Left ventricle myocardium inferior (tissue), 1 donor: ENCODE measurements at regions of chr3 and their contacts with region 1.

Region 1: DNA sequence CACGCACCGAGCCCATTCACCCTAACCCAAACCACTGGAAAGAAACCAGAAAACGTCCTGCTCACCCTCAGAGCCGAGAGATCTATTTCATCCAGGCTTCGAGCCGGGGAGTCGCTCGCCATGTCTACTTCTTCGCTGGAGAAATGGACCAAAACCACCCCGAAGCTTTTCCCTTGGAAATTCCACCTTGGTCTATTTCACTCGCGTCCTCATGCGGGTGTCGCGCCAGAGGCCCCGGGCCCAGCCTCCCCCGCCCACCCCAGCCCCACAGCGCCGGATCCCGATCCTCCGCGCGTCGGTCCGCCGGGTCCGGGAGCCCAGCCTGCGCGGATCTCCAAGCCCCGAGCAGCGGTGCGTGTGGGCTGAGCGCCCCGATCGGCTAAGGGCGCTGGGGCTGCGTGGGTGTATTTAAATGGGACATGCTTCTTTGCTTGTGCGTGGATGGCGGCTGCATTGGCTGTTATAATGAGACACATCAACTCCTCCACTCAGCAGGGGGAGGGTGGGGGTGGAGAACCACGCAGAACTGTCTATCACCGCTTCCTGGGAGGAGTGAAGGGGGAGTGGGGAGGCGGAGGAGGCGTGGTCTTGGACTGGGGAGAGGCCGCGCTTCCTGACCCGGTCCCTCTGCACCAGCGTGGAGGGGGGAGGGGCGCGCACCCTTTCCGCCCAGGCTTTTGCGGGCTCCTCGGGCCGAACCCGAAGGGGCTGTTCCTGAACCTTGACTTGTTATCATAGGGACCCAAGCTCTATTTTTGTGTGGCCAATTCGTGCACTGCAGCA is at the start of gene TNIK:
- DNase-seq: peak; percentile 94
- H3K4me3 ChIP-seq: peak within 1 kb of the TSS; percentile 84
- H3K27ac ChIP-seq: peak within 1 kb of the TSS; percentile 87
- H3K4me1 ChIP-seq: peaks cover 65% of the 10 kb centered on the region
- H3K27me3 ChIP-seq: peaks cover 13% of the 10 kb centered on the region
- CTCF ChIP-seq: no peak
- total RNA-seq, gene TNIK: 28.6 TPM

Region 2: DNA sequence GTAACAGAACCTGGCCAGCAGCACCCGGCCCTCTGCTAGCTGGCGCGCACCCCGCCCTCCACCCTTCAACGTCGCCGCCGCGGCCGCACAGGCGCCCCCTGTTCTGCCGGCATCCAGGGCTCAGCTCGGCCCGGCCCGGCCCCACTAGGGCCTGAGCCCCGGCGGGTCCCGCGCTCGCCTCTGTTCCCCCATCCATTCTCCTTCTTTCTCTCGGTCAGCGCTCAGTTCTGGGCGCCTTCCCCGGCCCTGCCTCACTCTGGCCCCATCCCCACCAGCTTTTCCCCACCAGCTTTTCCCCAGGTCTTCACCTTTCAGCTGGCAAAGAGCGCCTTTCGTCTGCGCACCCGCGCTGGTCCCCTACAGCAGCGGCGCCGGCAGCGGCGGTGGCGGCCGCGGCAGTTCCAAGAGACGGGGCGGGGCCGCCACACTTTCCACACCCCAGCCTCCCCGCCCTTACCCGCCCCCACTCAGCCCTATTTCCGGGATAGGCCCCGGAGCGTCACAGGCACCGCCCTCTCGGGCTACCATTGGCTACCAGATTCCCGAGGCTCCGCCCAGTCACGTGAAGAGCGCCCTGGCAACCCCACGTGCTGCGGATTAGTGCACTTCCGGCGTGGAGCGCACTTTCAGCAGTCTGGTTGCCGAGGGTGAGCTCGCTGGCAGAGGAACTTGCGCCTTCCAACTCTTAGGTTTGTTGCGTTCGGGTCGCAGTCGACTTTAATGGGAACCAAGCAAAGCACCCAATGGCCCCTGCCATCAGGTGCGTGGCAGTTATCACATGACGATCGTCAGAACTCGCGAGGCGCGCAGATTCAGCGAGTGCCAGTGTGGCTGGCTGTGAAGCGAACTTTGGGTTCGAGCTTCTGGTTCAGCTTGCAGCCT is 551.7 kb before region 1 on chr3 and contains the start of gene EIF5A2:
- intact Hi-C with region 1: no loop called
- DNase-seq: peak; percentile 96
- H3K4me3 ChIP-seq: peak within 1 kb of the TSS; percentile 80
- H3K27ac ChIP-seq: peak within 1 kb of the TSS; percentile 73
- H3K4me1 ChIP-seq: peaks cover 18% of the 10 kb centered on the region
- H3K27me3 ChIP-seq: no peaks in the 10 kb centered on the region
- CTCF ChIP-seq: no peak
- total RNA-seq, gene EIF5A2: 10.2 TPM

Region 3: GRCh38 chr3:171192176-171192854 is 267.8 kb before region 1 on chr3:
- intact Hi-C with region 1: loop called (anchors 10 kb)
- DNase-seq: no peak
- H3K4me3 ChIP-seq: no peak overlapping the region
- H3K27ac ChIP-seq: no peak overlapping the region
- H3K4me1 ChIP-seq: peaks cover 10% of the 10 kb centered on the region
- H3K27me3 ChIP-seq: no peaks in the 10 kb centered on the region
- CTCF ChIP-seq: no peak

Region 4: GRCh38 chr3:171293142-171293782 is 166.9 kb before region 1 on chr3:
- intact Hi-C with region 1: no loop called
- DNase-seq: no peak
- H3K4me3 ChIP-seq: no peak overlapping the region
- H3K27ac ChIP-seq: peak overlapping the region; percentile 90
- H3K4me1 ChIP-seq: peaks cover 54% of the 10 kb centered on the region
- H3K27me3 ChIP-seq: no peaks in the 10 kb centered on the region
- CTCF ChIP-seq: no peak

Region 5: DNA sequence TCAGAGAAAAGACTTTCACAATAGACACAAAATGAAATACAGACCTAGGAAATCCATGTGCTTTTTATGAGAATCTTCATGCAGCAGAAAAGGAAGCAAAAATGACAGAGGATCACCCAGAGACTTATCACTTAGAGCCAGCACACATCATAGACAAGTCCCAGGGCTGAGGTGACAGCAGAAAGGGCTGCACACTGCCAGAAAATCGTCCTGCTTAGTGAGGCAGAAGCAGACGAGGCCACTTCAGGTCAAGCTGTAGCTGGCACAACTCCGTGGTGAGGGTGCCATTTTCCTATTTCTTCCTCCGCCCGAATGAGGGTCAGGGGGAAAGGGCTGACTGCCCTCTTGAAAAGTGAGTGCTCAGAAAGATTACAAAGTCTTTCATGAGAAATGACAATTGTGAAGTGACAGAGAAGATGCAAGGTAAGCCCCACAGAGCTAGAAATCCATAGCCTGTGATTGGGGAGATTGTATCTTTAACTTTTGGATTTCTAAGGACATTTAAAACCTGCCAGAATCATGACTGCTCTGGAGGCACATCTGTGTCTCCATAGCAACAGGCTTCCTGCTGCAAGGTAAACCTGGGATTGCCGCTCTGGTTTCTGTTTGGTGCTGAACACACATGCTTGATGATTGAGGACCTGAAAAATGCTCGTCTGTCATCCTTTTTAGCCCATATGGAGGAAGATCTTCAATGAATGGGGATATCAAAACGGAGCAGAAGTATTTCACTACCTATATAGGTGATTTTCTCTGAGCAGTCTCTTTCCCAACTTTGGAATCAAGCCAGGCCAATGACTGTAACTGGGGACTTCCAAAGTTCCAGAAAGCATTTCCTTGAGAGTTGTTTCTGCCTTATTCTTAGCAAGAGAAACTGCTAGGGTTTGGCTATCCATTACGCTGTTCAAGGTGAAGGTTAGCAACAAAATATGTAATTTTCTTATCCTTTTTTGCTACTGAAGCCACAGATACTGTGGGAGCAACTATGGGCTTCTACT is 96.3 kb after region 1 on chr3:
- intact Hi-C with region 1: loop called (anchors 10 kb)
- DNase-seq: peak; percentile 36
- H3K4me3 ChIP-seq: no peak overlapping the region
- H3K27ac ChIP-seq: no peak overlapping the region
- H3K4me1 ChIP-seq: peaks cover 20% of the 10 kb centered on the region
- H3K27me3 ChIP-seq: no peaks in the 10 kb centered on the region
- CTCF ChIP-seq: no peak